H1 (cell line): ENCODE measurements at regions of chr16 and their contacts with region 1.

Region 1: GRCh38 chr16:70789226-70789926 is 11.6 kb downstream of the VAC14 start:
- DNase-seq: peak in 1 of 2 experiments; percentile 60
- H3K4me3 ChIP-seq: no peak overlapping the region
- H3K27ac ChIP-seq: peak overlapping the region; percentile 46; the same call in 1 of the 2 replicates
- H3K4me1 ChIP-seq: no peaks in the 10 kb centered on the region; a peak in 2 of 7 replicates
- H3K27me3 ChIP-seq: no peaks in the 10 kb centered on the region
- CTCF ChIP-seq: no peak
- EP300 ChIP-seq: no peak
- POLR2A ChIP-seq: no peak
- RAD21 ChIP-seq: no peak

Region 2: GRCh38 chr16:70800781-70801530 is 11.6 kb after region 1 on chr16 and contains the start of gene VAC14:
- CTCF ChIA-PET with region 1: interaction called, 3 read pairs
- POLR2A ChIA-PET with region 1: interaction called, 19 read pairs
- DNase-seq: peak; percentile 81 to 99
- H3K4me3 ChIP-seq: peak within 1 kb of the TSS; percentile 94 to 100 (median 95)
- H3K27ac ChIP-seq: peak within 1 kb of the TSS; percentile 66
- H3K4me1 ChIP-seq: peaks cover 1 to 5% (median 3%) of the 10 kb centered on the region in 4 experiments; a peak in 5 of 7 replicates
- H3K27me3 ChIP-seq: peaks cover 0 to 10% (median 2%) of the 10 kb centered on the region in 4 experiments; a peak in 5 of 7 replicates
- CTCF ChIP-seq: no peak
- EP300 ChIP-seq: no peak
- POLR2A ChIP-seq: peak; percentile 88 to 89
- RAD21 ChIP-seq: no peak
- total RNA-seq, gene VAC14: 52.8 and 56.0 TPM in 2 replicates